Prostate gland (tissue), 2 donors: ENCODE measurements at regions of chr4 and their contacts with region 1.

Region 1: GRCh38 chr4:129641179-129641578 is 545.2 kb downstream of the C4orf33 start:
- DNase-seq: peak; percentile 42
- H3K4me3 ChIP-seq: no peak overlapping the region
- H3K27ac ChIP-seq: no peak overlapping the region
- H3K4me1 ChIP-seq: no peaks in the 10 kb centered on the region
- H3K27me3 ChIP-seq: no peaks in the 10 kb centered on the region
- CTCF ChIP-seq: peak; percentile 47 to 70 (median 66)
- POLR2A ChIP-seq: no peak

Region 2: GRCh38 chr4:129362674-129363274 is 278.4 kb before region 1 on chr4:
- intact Hi-C with region 1: loop called (anchors 5 kb)
- DNase-seq: peak; percentile 45
- H3K4me3 ChIP-seq: no peak overlapping the region
- H3K27ac ChIP-seq: no peak overlapping the region
- H3K4me1 ChIP-seq: no peaks in the 10 kb centered on the region
- H3K27me3 ChIP-seq: no peaks in the 10 kb centered on the region
- CTCF ChIP-seq: peak in 3 of 4 experiments; percentile 71 to 79 (median 75)
- POLR2A ChIP-seq: no peak